ENCODE measurements at regions of chr17 and their contacts with region 1.

Region 1: GRCh38 chr17:31696184-31696602 is 162.9 kb downstream of the COPRS start:
- DNase-seq: peak; percentile 27 to 94 (median 65)

Region 2: DNA sequence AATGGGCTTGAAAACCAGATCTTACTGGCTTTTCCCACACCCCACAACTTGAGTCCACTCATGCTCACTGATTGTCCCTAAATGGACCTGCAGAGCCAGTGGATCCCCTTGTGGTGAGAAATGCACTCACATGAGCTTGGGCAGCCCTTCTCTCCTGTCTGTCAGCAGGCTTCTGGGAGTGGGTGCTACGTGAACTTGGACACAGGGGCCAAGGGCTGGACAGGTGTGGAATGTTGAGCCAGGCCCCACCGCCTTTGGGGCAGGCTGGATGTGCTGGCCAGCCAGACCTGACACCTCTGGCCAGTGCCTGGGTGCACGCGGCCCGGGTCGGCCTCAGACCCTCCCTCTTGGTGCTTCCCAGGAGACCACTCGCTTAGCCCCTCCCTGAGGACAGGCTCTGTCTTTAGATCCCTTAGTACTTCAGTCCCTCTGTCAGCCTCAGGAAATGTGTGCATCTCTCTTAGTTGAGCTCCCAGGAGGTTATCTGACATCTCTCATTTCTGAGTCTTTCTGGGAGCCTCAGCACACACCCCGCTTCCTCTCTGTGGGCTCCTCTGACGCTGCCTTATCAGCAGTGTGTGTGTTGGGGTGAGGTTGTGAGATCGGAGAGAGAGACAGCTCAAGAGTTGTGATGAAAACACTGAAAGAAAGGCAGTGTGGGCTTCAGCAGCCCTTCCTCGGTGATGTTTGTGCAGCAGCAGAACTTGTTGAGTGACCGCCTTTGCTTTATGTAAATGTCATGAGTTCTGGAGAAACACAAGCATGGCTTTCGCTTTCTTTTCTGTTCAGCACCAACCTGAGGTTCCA is 187.7 kb before region 1 on chr17:
- intact Hi-C with region 1: no loop called
- DNase-seq: peak in 2 of 10 donors; percentile 62 to 67

Region 3: DNA sequence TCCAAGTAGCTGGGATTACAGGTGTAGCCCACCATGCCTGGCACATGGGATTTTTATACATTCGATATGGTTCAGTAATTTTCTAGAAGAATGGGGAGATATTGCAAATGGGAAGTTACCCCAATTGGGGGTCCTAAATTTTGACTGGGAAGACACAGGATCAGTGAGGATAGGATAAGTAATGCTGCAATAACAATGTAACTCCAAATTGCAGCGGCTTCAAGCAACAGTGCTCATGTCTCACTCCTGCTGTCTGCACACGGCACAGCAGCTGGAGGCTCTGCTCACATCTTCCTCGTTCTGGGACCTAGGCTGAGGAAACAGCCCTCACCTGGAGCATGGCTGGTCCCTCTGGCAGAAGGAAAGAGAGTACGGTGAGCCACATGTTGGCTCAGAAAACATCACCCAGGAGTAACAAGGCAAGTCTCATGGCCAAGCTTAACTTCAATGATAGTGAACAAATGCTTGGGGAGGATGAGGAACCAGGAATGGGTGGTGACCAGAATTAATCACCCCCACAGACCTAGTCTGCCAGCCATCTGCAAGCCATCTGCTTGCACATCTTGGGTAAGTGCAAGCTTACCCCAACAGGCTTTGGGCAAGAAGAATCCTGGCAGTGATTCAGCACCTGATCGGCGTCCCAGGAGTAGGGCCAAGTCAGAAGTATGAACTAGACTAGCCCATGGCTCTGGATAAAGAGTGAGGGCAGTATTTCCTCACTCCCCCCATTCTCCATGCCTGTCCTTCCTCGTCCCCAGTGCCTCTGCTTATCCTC is 66.3 kb before region 1 on chr17:
- intact Hi-C with region 1: no loop called
- DNase-seq: no peak

Region 4: DNA sequence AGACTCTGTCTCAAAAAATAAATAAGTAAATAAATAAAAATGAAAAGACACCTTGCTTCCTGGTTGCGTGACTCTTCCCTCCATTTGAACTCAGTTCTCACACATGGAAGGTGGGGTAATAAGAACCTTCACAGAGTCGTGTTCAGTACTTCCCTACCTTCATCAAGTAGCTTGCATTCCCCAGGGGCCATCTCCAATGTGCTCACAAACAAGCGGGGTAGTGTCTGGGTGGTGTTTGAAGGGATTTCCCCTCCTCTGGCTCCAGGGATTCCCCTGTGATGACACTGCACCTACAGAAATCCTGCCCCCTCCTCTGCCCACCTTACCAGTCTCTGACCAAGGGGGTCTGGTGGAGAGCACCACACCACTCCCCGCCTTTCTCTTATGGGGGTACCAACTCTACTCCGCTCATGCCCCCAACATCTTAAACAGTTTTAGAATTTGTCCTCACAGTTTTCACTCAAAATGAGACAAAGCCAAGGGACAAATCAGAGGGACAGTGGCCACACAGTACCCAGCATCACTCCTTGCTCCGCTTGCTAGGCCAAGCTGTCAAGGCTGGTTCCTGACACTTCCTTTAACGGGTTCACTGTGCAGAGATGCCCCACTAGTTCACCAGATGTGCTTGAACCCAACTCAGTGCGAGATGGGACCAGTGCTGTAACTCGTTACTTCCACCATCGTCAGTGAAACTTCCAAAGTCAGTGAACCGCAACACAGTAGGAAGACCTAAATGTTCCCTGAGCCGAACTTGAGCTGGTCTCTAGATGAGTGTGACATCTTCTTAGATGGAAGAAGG is 93.7 kb after region 1 on chr17:
- intact Hi-C with region 1: loop called (anchors 5 kb)
- DNase-seq: peak in 1 of 10 donors; percentile 7

Measured in posterior cingulate gyrus (tissue), 11 donors.